A549 (cell line): ENCODE measurements at regions of chr20 and their contacts with region 1.

Region 1: GRCh38 chr20:33915726-33916331 is 77.9 kb upstream of the RALY start:
- DNase-seq: peak; percentile 32 to 84
- ATAC-seq: peak; percentile 77 to 88
- H3K4me3 ChIP-seq: no peak overlapping the region
- H3K27ac ChIP-seq: no peak overlapping the region
- H3K4me1 ChIP-seq: 0 out of 3 replicates have a peak, but pooled peaks cover 2% of the 10 kb centered on the region
- CTCF ChIP-seq: peak; percentile 61
- EP300 ChIP-seq: no peak
- POLR2A ChIP-seq: no peak
- RAD21 ChIP-seq: peak; percentile 50 to 57; a peak in 4 of 5 replicates

Region 2: GRCh38 chr20:33837998-33838864 is 77.6 kb before region 1 on chr20:
- CTCF ChIA-PET with region 1: no interaction called
- POLR2A ChIA-PET with region 1: no interaction called
- DNase-seq: no peak
- ATAC-seq: no peak
- H3K4me3 ChIP-seq: no peak overlapping the region
- H3K27ac ChIP-seq: no peak overlapping the region
- H3K4me1 ChIP-seq: peaks cover 6% of the 10 kb centered on the region; the same call in 1 of the 3 replicates
- CTCF ChIP-seq: peak; percentile 18; the same call in 1 of the 3 replicates
- EP300 ChIP-seq: no peak
- POLR2A ChIP-seq: no peak
- RAD21 ChIP-seq: 0 out of 5 replicates have a peak, but pooled peaks of 1 of the 2 experiments have one; percentile 25

Region 3: DNA sequence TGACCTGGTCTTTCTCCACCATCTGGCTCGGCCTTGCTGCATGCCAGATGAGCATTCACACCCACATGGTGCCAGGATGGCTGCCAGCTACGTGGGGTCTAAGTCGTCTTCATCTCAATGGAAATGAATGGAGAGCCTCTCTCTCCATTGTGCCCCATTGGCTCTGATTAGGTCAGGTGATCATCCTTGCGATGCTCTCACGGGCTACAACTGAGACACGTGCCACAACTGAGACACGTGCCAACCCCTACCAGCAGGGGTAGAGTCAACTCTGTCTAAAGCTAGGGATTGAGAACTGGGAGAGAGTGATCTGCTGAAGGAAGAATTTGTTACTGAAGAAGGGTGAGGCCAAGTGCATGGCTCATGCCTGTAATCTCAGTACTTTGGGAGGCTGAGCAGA is 10.6 kb after region 1 on chr20:
- CTCF ChIA-PET with region 1: interaction called, 12 read pairs
- POLR2A ChIA-PET with region 1: no interaction called
- DNase-seq: no peak
- ATAC-seq: no peak
- H3K4me3 ChIP-seq: no peak overlapping the region
- H3K27ac ChIP-seq: no peak overlapping the region
- H3K4me1 ChIP-seq: no peaks in the 10 kb centered on the region
- CTCF ChIP-seq: no peak
- EP300 ChIP-seq: no peak
- POLR2A ChIP-seq: no peak
- RAD21 ChIP-seq: no peak

Region 4: GRCh38 chr20:33940666-33941065 is 24.8 kb after region 1 on chr20:
- CTCF ChIA-PET with region 1: interaction called, 20 read pairs
- POLR2A ChIA-PET with region 1: no interaction called
- DNase-seq: no peak
- ATAC-seq: no peak
- H3K4me3 ChIP-seq: no peak overlapping the region
- H3K27ac ChIP-seq: no peak overlapping the region
- H3K4me1 ChIP-seq: no peaks in the 10 kb centered on the region; the same call in 2 of the 3 replicates
- CTCF ChIP-seq: no peak
- EP300 ChIP-seq: no peak
- POLR2A ChIP-seq: no peak
- RAD21 ChIP-seq: no peak